Common myeloid progenitor, CD34-positive (primary cell): ENCODE measurements at regions of chr9 and their contacts with region 1.

Region 1: GRCh38 chr9:120755827-120756434 is 37.3 kb downstream of the FBXW2 start:
- DNase-seq: peak; percentile 61 to 71 (median 64)
- H3K4me3 ChIP-seq: no peak overlapping the region
- H3K27ac ChIP-seq: no peak overlapping the region
- H3K4me1 ChIP-seq: peaks cover 7 to 29% (median 20%) of the 10 kb centered on the region in 4 experiments
- H3K27me3 ChIP-seq: no peaks in the 10 kb centered on the region

Region 2: GRCh38 chr9:120650352-120650751 is 105.6 kb before region 1 on chr9:
- CTCF ChIA-PET with region 1: no interaction called
- POLR2A ChIA-PET with region 1: no interaction called
- DNase-seq: no peak
- H3K4me3 ChIP-seq: no peak overlapping the region
- H3K27ac ChIP-seq: no peak overlapping the region
- H3K4me1 ChIP-seq: peaks cover 0 to under 1% (median 0%) of the 10 kb centered on the region in 4 experiments
- H3K27me3 ChIP-seq: no peaks in the 10 kb centered on the region

Region 3: DNA sequence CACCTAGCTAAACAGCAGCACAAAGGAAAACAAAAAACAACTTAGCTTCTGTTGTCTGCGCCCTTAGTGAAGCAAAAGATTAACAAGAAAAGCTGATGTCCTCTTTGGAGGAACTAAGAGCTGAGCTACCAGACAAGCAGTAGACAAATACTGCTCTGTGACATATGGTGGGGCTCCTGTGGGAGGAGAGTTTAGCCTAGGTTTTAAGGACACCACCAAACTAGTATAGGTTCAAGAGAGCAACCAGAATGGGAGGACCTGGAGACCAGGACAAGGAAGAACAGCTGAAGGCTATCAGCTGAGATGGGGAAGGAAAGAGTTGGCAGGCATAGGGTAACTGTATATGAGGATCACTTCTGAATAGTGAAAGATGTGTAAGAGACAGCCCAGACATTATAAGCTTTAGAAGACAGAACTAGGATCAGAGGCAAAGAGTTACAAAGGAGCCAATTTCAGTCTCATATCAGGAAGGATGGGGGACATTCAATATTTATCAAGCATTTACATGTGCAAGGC is 10.0 kb after region 1 on chr9:
- CTCF ChIA-PET with region 1: interaction called, 12 read pairs
- POLR2A ChIA-PET with region 1: no interaction called
- DNase-seq: no peak
- H3K4me3 ChIP-seq: no peak overlapping the region
- H3K27ac ChIP-seq: no peak overlapping the region
- H3K4me1 ChIP-seq: no peaks in the 10 kb centered on the region
- H3K27me3 ChIP-seq: no peaks in the 10 kb centered on the region

Region 4: DNA sequence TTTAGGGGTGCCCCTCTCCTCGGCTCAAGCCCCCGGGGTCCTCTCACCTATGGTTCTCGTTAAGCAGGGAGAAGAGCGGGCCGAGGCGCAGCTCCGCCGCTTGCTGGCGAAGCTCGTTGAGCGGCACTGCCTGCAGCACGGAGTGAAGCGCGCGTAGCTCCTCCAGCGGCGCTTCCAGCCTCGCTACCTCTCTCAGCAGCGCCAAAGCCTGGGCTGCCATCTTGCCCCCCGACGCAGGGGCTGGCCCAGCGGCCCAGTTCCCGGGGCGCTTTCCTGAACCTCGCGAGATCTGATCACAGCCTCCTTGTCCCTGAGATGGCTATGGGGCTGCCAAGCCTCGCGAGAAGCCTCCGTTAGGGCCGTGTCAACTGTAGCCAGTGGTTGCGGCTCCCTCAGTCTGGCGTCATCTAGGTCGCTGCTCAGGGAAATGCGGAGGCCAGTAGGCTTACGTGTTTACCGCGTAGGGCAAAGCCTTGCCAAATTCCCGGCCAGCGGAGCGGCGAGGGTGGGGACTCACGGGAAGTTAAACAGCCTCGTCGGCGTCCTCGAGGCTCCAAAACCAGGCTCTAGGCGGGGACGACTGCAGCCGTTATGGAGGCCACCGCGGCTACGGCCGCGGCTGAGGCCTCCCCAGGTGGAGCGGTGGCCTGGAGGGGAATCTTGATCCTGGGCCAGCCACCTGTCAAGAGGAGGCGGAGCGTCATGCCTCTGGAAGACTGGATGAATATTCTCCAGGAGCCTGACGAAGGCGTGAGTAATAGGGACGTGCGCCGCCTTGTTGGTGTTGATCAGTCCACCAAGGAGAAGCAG is 87.0 kb after region 1 on chr9 and contains the start of gene PSMD5:
- CTCF ChIA-PET with region 1: no interaction called
- POLR2A ChIA-PET with region 1: no interaction called
- DNase-seq: peak; percentile 99
- H3K4me3 ChIP-seq: peak within 1 kb of the TSS; percentile 58 to 97 (median 87)
- H3K27ac ChIP-seq: peak within 1 kb of the TSS; percentile 86 to 96
- H3K4me1 ChIP-seq: peaks cover 0 to 24% (median 10%) of the 10 kb centered on the region in 4 experiments
- H3K27me3 ChIP-seq: no peaks in the 10 kb centered on the region